Left ventricle myocardium superior (tissue), 1 donor: ENCODE measurements at regions of chr20 and their contacts with region 1.

Region 1: DNA sequence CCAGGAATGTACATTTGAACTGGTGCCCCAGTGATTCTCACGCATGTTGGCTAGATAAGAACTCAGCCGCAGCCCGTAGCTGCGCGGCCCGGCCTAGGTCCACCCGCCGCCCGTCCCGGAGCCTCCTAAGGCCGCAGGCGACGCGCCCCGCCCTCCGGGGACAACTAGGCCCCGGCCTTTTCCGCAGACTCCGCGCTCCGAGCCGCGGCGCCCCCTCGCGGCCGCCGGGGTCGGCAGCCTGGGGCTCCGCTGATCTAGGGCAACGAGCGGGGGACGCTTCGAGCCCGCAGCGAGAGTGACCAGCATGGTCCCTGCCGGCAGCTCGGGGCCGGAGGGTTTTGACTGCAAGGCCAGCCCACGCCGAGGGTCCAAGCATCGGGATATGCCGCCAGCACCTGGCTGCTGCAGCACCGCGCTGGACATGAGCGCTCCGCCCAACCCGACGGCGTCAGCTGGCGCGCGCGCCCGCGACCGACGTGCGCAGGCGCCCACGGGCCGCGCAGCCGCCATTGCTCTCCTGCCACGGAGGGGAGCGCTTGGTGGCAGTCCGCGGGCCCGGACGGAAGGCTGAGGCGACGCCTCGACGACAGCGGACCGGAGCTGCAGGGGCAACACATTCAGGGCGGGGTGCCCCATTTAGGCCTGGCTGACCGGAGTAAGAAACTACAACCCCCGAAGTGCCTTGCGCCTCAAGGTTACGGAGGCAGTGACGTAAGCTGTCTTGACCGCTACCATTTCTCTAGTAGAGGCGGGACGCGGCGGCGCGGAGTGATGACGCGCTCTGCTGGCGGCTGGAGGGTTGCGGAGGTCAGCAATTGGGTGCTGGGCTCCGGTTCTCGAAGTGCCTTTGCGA is at the start of gene AP5S1:
- DNase-seq: peak; percentile 99
- ATAC-seq: peak; percentile 93
- total RNA-seq, gene AP5S1: 10.2 TPM

Region 2: GRCh38 chr20:3786665-3787323 is 33.5 kb before region 1 on chr20 and contains the start of gene CENPB:
- intact Hi-C with region 1: loop called (anchors 5 kb)
- DNase-seq: peak; percentile 95
- ATAC-seq: peak; percentile 94
- total RNA-seq, gene CENPB: 68.3 TPM

Region 3: DNA sequence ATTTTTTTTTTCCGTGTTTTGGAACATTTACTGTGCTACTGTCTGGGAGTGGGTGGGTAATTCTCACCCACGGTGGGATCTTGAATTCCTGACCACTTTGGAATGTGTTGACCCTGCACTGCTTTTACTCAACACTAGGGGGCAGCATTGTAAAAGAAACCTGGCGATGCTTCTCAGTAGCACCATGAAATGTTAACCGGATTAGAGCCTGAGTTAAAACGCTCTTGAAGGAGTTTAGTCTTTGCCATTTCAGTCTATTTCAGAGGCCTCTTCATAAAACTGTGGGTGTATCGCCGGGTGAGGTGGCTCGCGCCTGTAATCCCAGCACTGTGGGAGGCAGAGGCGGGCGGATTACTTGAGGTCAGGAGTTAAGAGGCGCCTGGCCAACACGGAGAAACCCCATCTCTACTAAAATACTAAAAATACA is 787.0 kb after region 1 on chr20:
- intact Hi-C with region 1: no loop called
- DNase-seq: no peak
- ATAC-seq: peak; percentile 82